Psoas muscle (tissue), 8 donors: ENCODE measurements at regions of chr11 and their contacts with region 1.

Region 1: GRCh38 chr11:93623179-93623578 is 38.3 kb upstream of the CEP295 start:
- DNase-seq: no peak
- ATAC-seq: no peak
- H3K4me3 ChIP-seq: no peak overlapping the region
- H3K27ac ChIP-seq: no peak overlapping the region
- H3K4me1 ChIP-seq: no peaks in the 10 kb centered on the region
- H3K27me3 ChIP-seq: peaks cover 0 to 3% (median 0%) of the 10 kb centered on the region in 3 donors
- CTCF ChIP-seq: no peak

Region 2: GRCh38 chr11:93234602-93235207 is 388.5 kb before region 1 on chr11:
- intact Hi-C with region 1: loop called (anchors 1 to 10 kb)
- DNase-seq: peak; percentile 66 to 75
- ATAC-seq: peak; percentile 97 to 99 (median 98)
- H3K4me3 ChIP-seq: no peak overlapping the region
- H3K27ac ChIP-seq: no peak overlapping the region
- H3K4me1 ChIP-seq: no peaks in the 10 kb centered on the region
- H3K27me3 ChIP-seq: peaks cover 0 to 3% (median 0%) of the 10 kb centered on the region in 3 donors
- CTCF ChIP-seq: peak; percentile 92

Region 3: DNA sequence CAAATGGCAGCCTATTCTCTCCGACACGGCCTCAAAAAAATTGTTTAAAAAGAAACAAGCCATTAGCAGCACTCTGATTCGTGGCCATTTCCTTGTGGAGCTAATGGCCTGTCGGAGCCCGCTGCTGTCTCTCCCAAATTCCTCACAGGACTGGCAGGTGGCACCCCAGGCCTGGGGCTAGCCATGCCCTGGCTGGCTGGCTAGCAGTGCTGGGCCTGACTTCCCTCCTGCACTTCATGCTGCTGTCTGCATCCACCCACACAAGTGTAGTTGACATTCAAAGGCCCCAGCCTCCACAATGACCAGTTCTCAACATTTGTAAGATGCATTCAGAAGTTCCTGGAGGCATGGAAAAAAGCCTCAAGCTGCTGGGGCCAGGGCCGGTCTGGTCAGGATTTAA is 141.5 kb before region 1 on chr11:
- intact Hi-C with region 1: loop called in 1 of 2 experiments (anchors 5 kb)
- DNase-seq: peak in 1 of 2 donors; percentile 18
- ATAC-seq: peak; percentile 71 to 90 (median 82)
- H3K4me3 ChIP-seq: no peak overlapping the region
- H3K27ac ChIP-seq: no peak overlapping the region
- H3K4me1 ChIP-seq: no peaks in the 10 kb centered on the region
- H3K27me3 ChIP-seq: no peaks in the 10 kb centered on the region
- CTCF ChIP-seq: peak; percentile 31

Region 4: GRCh38 chr11:93791493-93791892 is 168.3 kb after region 1 on chr11:
- intact Hi-C with region 1: no loop called
- DNase-seq: no peak
- ATAC-seq: no peak
- H3K4me3 ChIP-seq: no peak overlapping the region
- H3K27ac ChIP-seq: no peak overlapping the region
- H3K4me1 ChIP-seq: peaks cover 14% of the 10 kb centered on the region
- H3K27me3 ChIP-seq: no peaks in the 10 kb centered on the region
- CTCF ChIP-seq: no peak